Panc1 (cell line): ENCODE measurements at regions of chr9 and their contacts with region 1.

Region 1: GRCh38 chr9:74147906-74148305 is 349.2 kb upstream of the RORB start:
- DNase-seq: no peak
- ATAC-seq: no peak
- H3K4me3 ChIP-seq: no peak overlapping the region
- H3K27ac ChIP-seq: no peak overlapping the region
- H3K4me1 ChIP-seq: no peaks in the 10 kb centered on the region
- H3K27me3 ChIP-seq: no peaks in the 10 kb centered on the region
- CTCF ChIP-seq: no peak

Region 2: DNA sequence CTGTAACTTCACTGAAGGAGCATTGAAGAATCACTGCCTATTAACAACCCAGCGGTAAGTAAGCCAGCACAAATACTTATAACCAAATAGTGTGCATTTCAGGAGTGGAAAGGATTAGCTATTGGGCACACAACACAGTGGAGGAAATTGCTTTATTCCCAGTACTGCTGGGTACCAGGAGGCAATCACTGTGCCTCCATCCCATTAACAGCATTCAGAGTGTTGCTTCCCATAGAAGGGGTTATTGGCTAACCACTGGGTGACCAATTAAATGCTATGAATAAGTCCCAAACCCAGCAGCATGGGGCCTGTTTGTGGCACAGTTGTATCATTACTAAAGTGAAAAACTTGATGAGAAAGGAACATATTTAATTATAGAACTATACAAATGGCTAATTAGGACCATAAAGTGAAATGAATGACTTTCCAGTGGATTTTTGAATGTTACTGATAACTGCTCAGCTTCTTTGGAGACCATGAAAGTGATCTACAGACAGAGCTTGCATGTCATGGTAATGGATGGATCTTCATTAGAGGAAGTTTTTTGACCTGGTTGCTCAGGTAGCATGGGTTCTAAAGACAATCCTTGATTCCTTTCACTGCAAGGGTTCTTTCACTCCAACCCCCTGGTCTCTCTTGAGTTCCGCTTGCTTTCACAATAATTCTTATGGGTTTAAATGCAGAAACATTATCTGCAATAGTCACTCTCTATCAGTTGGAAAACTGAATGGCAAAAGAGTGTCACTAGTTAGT is 64.0 kb before region 1 on chr9:
- CTCF ChIA-PET with region 1: no interaction called
- POLR2A ChIA-PET with region 1: no interaction called
- in situ Hi-C with region 1: no loop called
- intact Hi-C with region 1: loop called (anchors 10 kb)
- DNase-seq: no peak
- ATAC-seq: no peak
- H3K4me3 ChIP-seq: no peak overlapping the region
- H3K27ac ChIP-seq: no peak overlapping the region
- H3K4me1 ChIP-seq: no peaks in the 10 kb centered on the region
- H3K27me3 ChIP-seq: no peaks in the 10 kb centered on the region
- CTCF ChIP-seq: no peak